GM23248 (cell line): ENCODE measurements at regions of chr1 and their contacts with region 1.

Region 1: DNA sequence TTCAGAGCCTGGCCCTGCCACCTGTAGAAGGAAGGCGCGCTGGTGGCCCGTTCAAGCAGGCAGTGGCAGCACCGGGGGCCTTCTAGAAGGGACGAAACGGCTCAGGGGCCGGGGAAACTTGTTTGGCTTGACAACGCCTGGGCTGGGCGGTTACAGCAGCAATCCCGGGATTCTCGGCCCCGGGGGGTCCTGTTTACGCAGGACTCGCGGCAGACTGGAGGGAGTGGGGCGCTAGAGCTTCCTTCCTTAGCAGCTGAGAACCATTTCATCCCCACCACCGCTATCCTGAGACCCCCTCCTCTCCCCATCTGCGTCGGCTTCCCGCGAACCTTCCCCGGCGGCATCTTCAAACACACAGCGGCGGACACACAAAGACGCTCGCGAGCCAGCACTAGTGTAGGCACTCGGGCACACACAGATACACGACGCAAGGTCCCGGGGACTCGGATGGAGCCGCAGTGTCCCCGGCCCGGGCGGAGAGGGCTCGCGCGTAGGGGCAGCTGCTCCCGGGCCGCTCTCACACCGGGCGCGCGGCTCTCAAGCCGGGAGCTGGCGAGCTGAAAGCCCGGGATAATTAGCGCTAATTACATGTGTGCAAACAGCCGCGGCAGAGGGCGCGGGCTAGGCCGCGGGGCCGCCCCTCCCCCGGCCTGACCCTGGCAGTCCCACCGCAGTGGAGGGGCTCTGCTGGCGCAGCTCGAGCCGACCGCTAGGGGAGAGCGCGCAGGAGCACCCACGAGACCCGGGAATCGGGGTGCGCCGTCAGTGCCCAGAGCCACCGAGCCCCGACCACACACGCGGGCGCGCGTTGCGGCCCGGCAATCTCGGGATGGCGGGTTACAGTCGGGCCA is 271.4 kb downstream of the FOXD2 start:
- DNase-seq: peak; percentile 47
- H3K4me3 ChIP-seq: peak overlapping the region; percentile 58
- H3K27ac ChIP-seq: no peak overlapping the region
- H3K4me1 ChIP-seq: 0 out of 2 replicates have a peak, but pooled peaks cover under 1% of the 10 kb centered on the region
- H3K27me3 ChIP-seq: peaks cover 67% of the 10 kb centered on the region

Region 2: DNA sequence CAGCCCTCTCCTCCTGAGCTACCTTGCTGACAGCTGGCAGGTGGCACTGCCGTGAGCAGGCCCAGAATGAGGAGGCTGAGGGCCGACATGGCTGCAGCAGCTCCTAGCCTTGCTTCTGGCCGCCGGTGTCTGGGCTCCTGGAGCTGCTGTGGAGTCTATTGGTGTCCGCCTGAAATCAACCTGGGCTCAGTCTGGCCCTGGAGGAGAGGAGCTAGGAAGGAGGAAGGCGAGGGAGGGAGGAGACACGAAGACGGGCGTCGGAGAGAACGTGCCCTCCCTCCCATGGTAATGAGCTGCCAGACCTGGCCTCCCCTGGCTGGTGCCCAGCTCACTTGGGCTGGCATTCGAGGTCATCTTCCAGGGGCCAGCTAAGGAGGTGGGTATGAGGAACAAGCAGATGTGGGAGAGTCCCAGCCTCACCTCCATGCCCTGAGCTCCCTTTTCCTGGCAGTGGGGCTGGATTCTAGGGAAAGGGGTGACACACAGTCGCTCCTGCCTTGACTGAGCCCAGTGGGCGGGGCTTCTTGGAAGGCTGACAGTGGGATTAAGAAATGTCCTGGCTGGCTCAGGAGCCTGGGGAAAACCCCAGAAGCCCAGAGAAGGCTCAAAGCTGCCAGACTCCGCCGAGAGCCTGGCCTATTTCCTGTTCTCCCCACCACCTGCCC is 519.3 kb before region 1 on chr1 and contains the start of gene PDZK1IP1:
- in situ Hi-C with region 1: loop called (anchors 5 kb)
- DNase-seq: peak; percentile 95
- H3K4me3 ChIP-seq: no peak within 1 kb of the TSS
- H3K27ac ChIP-seq: no peak within 1 kb of the TSS
- H3K4me1 ChIP-seq: peaks cover 18% of the 10 kb centered on the region
- H3K27me3 ChIP-seq: no peaks in the 10 kb centered on the region
- total RNA-seq, gene PDZK1IP1: not detected in 2 replicates

Region 3: DNA sequence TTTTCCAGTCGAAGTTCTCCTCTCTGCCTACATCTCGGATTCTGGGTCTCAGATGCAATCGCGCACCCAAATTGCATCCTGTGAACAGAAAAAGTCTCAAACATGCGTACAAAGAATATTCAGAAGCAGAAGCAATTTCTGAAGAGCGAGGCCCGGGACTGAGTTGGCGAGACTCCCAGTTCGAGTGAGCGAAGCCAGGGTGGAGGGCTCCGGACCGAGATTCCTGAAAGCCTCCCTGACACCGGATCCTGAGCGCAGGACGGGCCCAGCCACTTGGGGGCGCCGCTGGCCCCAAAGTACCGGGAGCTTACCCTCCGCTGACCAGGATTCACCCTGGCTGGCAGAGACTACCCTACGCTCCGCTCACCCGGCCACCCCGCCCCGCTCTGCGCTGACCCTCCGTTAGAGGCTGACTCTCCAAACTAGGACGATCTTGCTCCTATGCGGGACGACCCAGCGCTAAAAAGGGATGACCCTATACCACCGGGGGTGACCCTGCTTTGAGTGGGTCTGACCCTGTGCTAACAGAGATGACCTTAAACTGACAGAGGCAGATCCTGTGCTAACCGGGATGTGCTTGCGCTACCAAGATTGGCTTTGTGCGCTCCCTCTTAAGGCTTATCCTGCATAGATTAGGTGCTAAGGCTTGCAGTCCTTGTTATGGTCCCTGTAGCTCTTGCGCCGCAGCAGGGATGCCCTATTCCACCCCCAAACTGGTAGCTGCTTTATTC is 259.3 kb before region 1 on chr1:
- in situ Hi-C with region 1: loop called (anchors 10 kb)
- DNase-seq: peak; percentile 30
- H3K4me3 ChIP-seq: no peak overlapping the region
- H3K27ac ChIP-seq: no peak overlapping the region
- H3K4me1 ChIP-seq: no peaks in the 10 kb centered on the region
- H3K27me3 ChIP-seq: peaks cover 62% of the 10 kb centered on the region